ENCODE measurements at regions of chr6 and their contacts with region 1.

Region 1: DNA sequence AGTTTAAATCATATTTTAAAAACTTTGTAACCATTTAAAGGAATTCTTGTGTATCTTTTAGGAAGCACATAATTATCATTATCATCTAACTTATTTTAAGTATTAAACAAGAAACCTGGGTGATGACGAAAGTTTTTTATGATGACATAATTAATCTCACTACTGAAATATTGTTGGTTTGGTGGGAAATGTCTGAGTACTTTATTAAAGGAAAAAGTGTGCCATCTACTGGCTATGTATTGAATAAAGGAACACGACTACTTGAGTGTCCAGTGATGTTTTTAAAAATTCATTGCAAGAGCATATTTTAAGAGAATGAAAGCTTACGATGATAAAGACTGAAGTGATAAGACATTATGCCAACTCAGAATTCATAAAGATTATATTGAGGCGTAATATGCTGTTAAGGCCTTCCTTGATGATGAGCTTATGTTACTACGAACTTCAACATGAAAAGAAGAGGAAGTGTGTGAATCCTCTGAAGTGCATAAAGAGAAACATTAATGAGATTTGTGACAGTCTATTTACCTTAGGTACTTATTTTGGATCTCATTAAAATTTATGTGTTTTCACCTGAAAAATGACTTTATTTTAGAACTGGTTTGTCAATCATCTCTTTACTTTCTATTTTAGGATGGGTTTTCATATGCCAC is 12.0 kb upstream of the TRMT11 start:
- DNase-seq: peak; percentile 66 to 81 (median 79)
- H3K4me3 ChIP-seq: no peak overlapping the region
- H3K27ac ChIP-seq: no peak overlapping the region
- H3K4me1 ChIP-seq: peaks cover 0 to 2% (median 0%) of the 10 kb centered on the region in 4 experiments
- H3K27me3 ChIP-seq: no peaks in the 10 kb centered on the region

Region 2: DNA sequence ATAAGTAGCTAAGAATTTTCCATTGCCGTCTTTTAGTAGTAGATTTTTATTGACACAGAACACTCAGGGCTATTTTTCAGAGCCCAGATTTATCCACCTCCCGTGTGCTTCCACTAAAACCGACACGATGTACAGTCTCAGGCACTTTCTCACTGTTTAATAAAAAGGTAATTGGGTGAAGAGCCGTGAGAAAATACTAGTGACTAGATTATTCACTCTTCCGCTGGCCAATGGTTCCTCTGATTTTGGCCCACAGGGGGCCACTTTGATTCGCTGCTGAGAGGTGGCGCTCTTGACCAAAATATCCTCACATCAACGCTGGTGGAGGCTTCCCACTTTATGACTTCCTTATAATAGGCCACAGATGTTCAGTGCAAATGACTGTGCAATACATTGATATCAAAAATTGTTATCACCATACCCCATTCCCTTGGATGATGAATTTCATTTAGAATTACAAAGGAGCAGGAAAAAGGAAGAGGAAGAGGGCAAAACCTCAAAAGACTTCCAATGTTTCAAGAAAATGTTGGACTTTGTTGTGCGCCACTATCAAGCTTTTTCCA is 660.2 kb before region 1 on chr6:
- CTCF ChIA-PET with region 1: interaction called, 11 read pairs
- POLR2A ChIA-PET with region 1: no interaction called
- DNase-seq: peak; percentile 76 to 78 (median 77)
- H3K4me3 ChIP-seq: no peak overlapping the region
- H3K27ac ChIP-seq: no peak overlapping the region
- H3K4me1 ChIP-seq: no peaks in the 10 kb centered on the region
- H3K27me3 ChIP-seq: peaks cover 0 to 20% (median 4%) of the 10 kb centered on the region in 5 experiments

Region 3: GRCh38 chr6:125779924-125780539 is 194.3 kb before region 1 on chr6:
- CTCF ChIA-PET with region 1: interaction called, 28 read pairs
- POLR2A ChIA-PET with region 1: no interaction called
- DNase-seq: peak; percentile 91 to 95 (median 94)
- H3K4me3 ChIP-seq: peak overlapping the region in 6 of 7 experiments; percentile 80 to 100 (median 98)
- H3K27ac ChIP-seq: peak overlapping the region; percentile 87 to 94
- H3K4me1 ChIP-seq: peaks cover 3 to 20% (median 11%) of the 10 kb centered on the region in 4 experiments
- H3K27me3 ChIP-seq: no peaks in the 10 kb centered on the region

Region 4: GRCh38 chr6:125888989-125889656 is 85.2 kb before region 1 on chr6:
- CTCF ChIA-PET with region 1: interaction called, 12 read pairs
- POLR2A ChIA-PET with region 1: interaction called, 4 read pairs
- DNase-seq: peak; percentile 51 to 73 (median 70)
- H3K4me3 ChIP-seq: no peak overlapping the region
- H3K27ac ChIP-seq: no peak overlapping the region
- H3K4me1 ChIP-seq: peaks cover 0 to 20% (median 1%) of the 10 kb centered on the region in 4 experiments
- H3K27me3 ChIP-seq: no peaks in the 10 kb centered on the region

Region 5: GRCh38 chr6:125906158-125906998 is 68.0 kb before region 1 on chr6:
- CTCF ChIA-PET with region 1: interaction called, 12 read pairs
- POLR2A ChIA-PET with region 1: no interaction called
- DNase-seq: peak; percentile 53 to 66 (median 55)
- H3K4me3 ChIP-seq: no peak overlapping the region
- H3K27ac ChIP-seq: no peak overlapping the region
- H3K4me1 ChIP-seq: peaks cover 0 to 10% (median 7%) of the 10 kb centered on the region in 4 experiments
- H3K27me3 ChIP-seq: no peaks in the 10 kb centered on the region

Region 6: DNA sequence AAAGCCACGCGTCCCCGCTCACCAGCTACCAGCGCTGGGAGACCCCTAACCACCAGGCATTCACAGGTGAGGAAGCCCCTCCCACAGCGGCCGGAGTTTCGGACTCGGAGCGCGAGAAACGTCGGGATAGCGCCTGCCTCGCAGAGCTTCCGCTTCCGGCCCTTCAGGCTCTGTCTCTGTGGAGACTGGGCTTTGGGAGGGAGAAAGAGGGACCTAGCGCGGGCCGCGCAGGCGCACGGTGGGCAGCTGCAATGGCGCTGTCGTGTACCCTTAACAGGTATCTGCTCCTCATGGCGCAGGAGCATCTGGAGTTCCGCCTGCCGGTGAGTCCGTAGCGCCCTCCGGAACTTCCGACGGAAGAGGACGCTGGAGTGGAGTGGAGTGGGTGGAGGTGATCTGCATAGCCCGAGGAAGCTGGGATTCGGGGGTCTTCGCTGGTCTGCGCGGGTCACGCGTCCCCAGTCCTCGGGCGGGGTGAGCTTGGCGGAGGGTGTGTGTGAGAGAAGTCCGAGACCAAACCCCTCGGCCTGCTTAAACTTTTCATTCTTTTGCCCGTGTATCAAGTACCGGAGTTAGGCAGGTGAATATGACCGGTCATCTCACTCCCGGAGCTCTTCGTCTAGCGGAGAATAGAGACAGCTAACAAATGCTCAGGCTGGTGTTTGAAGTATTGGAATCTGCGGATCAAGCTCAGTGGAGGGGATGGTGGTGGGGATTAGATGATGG is 12.1 kb after region 1 on chr6 and contains the start of gene TRMT11:
- CTCF ChIA-PET with region 1: interaction called, 14 read pairs
- POLR2A ChIA-PET with region 1: no interaction called
- DNase-seq: peak; percentile 76 to 81 (median 79)
- H3K4me3 ChIP-seq: peak within 1 kb of the TSS; percentile 82 to 98 (median 94)
- H3K27ac ChIP-seq: peak within 1 kb of the TSS; percentile 20 to 76
- H3K4me1 ChIP-seq: peaks cover 0 to 22% (median 16%) of the 10 kb centered on the region in 4 experiments
- H3K27me3 ChIP-seq: no peaks in the 10 kb centered on the region

Measured in common myeloid progenitor, CD34-positive (primary cell).